Right lobe of liver (tissue), 6 donors: ENCODE measurements at regions of chr1 and their contacts with region 1.

Region 1: DNA sequence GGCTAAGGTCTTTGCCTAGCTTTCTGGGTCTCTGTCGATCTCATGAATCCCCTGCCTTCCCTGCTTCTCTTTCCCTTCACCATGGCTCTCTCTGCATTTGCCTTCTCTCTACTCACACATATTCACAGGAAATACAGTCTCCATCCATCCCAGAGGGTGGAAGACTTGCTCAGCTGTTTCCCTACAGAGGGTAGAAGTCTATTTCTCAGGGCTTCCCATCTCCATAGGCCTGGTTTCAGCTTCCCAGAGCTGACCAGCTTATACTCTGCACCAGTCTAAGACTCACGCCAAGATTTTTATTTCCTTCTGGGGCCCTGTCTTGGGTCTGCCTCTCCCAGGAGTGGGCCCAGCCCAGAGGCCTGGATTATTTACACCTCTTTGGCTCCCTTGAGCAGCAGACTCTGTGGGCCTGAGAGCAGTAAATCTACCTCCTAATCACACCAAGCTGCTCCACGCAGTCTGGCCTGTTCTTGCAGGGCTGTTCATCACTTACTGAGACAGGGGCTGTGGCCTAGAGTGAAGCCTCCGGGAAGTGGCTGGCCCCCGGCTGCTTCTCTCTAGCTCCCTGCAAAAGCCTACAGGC is 102.5 kb downstream of the PLXNA2 start:
- DNase-seq: no peak
- ATAC-seq: no peak
- H3K4me3 ChIP-seq: no peak overlapping the region
- H3K27ac ChIP-seq: no peak overlapping the region
- H3K4me1 ChIP-seq: no peaks in the 10 kb centered on the region
- H3K27me3 ChIP-seq: no peaks in the 10 kb centered on the region
- CTCF ChIP-seq: no peak
- POLR2A ChIP-seq: no peak

Region 2: DNA sequence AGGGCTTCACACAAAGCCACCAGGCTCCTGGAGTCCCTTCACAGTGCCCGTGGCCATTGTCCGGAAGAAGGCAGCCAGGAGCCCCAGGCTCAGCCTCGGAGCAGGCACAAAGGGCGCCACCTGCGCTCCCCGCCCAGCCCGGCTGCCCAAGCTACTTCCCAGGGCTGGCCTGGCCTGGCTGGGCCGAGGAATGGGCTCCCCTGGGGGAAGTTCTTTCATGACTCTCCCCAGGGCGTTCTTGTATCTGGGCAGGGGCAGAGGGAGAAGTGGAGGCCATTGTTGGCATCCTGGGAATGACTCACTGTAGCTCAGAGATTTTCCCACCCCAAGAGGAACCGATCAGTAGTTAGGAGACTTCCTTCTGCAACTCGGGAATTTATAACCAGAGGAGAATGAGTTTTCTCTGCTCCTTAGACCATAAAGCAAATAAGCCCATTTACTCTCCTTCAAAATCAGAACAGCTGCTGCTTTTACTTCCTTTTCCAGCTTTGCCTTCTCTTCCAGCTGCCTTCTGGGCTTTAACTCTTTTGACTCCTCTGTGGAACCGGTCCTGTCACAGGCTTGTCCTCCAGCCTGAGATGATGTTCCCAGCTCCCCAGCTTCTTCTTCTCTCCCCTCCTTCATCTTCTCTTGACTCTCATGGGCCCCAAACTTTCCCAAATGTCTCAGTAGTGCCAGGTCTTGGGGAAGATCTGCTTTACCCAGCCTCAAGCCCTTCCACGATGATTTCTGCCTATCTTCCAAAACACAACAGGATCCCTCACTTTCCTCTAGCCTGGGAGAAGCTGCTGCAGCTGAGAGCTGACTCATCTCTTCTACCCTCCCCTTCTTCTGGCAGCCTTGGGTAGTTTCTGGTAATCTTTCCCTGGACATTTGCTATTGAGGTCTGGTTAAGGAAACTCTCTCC is 112.1 kb before region 1 on chr1:
- intact Hi-C with region 1: no loop called
- DNase-seq: no peak
- ATAC-seq: peak in 2 of 4 donors; percentile 18 to 20
- H3K4me3 ChIP-seq: no peak overlapping the region
- H3K27ac ChIP-seq: no peak overlapping the region
- H3K4me1 ChIP-seq: no peaks in the 10 kb centered on the region
- H3K27me3 ChIP-seq: no peaks in the 10 kb centered on the region
- CTCF ChIP-seq: no peak
- POLR2A ChIP-seq: no peak

Region 3: DNA sequence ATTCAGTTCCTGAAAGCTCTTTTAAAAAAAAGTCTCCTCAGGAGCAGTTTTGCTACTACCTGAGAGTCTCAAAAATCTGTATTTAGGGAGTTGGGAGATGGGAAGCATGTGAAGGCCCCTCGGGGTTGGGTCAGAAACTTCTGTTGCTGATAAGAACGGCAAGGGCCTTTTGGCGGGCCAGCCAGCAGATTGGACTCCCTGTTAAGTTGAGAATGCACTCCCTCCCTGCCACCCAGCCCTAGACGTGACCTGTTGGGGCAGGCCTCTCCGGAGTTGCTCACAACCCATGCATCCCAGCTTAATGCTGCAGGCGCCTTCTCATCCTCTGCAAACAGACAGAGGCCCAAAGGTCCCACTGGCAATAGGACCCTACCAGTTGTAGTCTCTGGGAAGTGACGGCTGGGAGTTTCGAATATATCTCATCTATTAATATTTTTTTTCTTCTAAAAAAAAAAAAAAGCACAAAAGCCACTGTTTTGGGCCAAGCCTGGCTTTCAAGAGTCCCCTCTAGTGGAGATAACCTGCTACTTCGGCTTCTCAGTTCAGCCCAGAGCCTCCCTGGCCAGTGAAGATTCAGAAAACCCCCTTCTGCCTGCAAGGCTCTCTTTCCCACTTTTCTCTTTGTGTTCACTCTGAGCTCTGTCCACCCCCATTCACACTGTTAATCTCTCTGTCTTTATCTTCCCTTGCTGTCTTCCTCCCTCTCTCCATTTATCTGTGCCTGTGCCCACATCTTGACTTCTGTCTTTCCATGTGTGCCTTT is 97.2 kb after region 1 on chr1:
- intact Hi-C with region 1: loop called in 1 of 2 experiments (anchors 5 kb)
- DNase-seq: peak in 1 of 3 donors; percentile 44
- ATAC-seq: peak; percentile 45 to 50 (median 48)
- H3K4me3 ChIP-seq: no peak overlapping the region
- H3K27ac ChIP-seq: peak overlapping the region in 2 of 3 donors; percentile 60 to 82
- H3K4me1 ChIP-seq: peaks cover 0 to 49% (median 17%) of the 10 kb centered on the region in 4 donors
- H3K27me3 ChIP-seq: no peaks in the 10 kb centered on the region
- CTCF ChIP-seq: peak; percentile 47 to 82 (median 73)
- POLR2A ChIP-seq: no peak

Region 4: GRCh38 chr1:208270651-208271111 is 129.0 kb after region 1 on chr1:
- intact Hi-C with region 1: no loop called
- DNase-seq: no peak
- ATAC-seq: no peak
- H3K4me3 ChIP-seq: no peak overlapping the region
- H3K27ac ChIP-seq: no peak overlapping the region
- H3K4me1 ChIP-seq: no peaks in the 10 kb centered on the region
- H3K27me3 ChIP-seq: no peaks in the 10 kb centered on the region
- CTCF ChIP-seq: no peak
- POLR2A ChIP-seq: no peak